Right ventricle myocardium superior (tissue), 1 donor: ENCODE measurements at regions of chr21 and their contacts with region 1.

Region 1: DNA sequence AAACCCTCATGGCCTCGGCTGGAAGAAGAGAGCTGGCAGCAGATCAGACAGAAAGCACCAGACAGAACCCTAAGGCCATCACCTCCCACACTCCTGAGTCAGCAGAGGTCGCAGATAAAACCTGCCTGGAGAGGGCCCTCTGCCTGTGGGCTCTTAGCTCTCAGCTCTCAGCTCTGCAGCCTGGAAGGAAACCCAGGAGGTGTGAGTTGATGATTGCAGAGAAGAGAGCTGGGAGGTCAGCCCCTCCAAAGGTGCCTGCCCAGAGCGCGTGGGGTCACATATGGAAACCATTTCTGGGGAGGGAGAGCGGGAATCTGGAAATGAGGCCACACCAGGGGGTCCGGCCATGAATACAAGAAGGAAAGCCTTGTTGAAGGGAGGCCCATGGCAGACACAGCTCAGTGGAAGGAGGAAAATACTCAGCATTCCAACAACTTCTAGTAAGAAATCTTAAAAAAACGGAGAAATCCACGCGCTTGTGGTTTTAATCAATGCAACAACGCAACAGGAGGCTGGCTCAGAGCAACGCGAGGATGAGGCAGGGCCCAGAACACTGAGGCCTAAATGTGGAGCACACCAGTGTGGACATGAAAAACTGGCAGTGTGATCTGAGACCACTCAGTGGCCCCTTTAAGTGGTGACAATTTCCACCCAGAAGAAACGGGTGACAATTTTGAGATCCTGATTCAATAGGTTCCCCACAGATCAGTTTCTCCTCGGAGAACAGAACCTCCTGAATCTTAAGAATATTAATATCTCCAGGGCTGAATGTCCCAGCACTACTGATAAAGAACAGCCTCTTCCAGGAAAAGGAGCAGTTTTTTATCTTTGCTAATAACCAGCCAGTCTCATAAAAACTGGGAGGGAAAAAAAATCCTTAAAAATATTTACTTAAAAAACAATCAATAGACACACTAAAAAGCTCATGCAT is 45.7 kb downstream of the PSMG1 start:
- DNase-seq: no peak
- ATAC-seq: peak; percentile 40

Region 2: GRCh38 chr21:38733973-38734546 is 403.5 kb before region 1 on chr21:
- intact Hi-C with region 1: loop called (anchors 1 kb)
- DNase-seq: peak; percentile 95
- ATAC-seq: peak; percentile 96